Mucosa of descending colon (tissue), 3 donors: ENCODE measurements at regions of chr19 and their contacts with region 1.

Region 1: DNA sequence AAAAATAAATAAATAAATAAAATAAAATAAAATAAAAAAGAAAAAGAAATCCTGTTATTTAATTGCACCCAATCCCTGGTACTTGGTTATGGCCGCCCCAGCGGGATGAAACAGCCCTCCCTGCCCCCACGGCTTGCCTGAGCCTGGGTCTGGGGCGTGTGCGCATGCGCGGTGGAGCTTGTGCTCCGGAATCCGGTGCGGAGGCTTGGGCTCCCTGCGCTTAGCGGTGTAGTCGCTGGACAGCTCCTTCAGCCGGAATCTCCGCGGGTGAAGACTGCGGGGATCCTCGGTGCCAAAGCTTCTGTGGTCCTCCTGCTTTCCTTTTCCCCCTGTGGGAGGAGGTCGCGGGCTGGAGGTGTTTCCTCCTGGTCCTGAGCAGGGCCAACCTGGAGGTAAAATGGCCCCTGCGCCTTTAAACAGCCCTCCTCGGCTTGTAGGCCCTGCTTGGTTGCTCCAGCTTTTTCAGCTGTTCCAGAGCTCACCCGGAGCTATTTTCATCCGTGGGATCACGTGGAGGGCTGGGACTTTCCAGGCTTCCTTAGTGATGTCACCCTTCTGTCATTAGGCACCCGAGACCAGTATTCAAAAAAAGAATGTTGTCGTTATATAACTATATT is at the start of gene PLA2G4C:
- DNase-seq: peak; percentile 86 to 88 (median 87)
- ATAC-seq: peak; percentile 81
- H3K4me3 ChIP-seq: no peak within 1 kb of the TSS
- H3K4me1 ChIP-seq: peaks cover 12% of the 10 kb centered on the region
- CTCF ChIP-seq: no peak
- total RNA-seq, gene PLA2G4C: 5.0 to 13.1 (median 7.8) TPM

Region 2: DNA sequence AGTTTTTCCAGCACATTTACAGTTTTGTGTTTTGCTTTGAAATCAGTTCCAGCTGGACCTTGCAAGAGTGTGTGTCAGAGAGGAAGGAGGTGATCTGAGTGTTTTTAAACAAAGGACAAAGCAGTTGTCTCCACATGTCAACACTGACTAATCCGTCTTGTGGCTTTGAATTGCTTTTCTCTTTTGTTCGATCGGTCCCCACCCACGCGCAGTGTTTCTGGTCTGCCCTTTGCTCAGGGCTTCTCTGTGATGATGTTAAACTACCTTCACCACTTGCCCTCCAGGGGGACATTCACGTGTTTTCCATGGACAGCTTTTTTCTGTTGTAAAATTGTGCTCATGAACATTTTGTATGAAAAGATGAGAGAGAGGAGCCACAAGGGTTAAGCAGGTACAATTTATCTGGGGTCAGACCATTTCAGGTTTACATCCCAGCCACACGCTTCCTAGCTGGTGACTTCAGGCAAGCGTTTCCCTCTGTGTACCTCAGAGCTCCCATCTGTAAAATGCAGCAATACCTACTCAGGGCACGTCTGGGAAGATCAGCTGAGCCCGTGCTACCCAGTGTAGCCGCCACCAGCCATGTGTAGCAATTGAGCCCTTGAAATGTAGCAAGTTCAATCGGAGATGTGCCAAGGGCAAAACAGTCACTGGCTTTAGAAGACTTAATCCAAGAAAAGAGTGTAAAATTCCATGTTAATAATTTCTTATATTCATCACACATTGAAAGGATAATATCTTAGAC is 13.6 kb after region 1 on chr19:
- intact Hi-C with region 1: no loop called
- DNase-seq: no peak
- ATAC-seq: peak; percentile 55
- H3K4me3 ChIP-seq: no peak overlapping the region
- H3K4me1 ChIP-seq: no peaks in the 10 kb centered on the region
- CTCF ChIP-seq: no peak

Region 3: DNA sequence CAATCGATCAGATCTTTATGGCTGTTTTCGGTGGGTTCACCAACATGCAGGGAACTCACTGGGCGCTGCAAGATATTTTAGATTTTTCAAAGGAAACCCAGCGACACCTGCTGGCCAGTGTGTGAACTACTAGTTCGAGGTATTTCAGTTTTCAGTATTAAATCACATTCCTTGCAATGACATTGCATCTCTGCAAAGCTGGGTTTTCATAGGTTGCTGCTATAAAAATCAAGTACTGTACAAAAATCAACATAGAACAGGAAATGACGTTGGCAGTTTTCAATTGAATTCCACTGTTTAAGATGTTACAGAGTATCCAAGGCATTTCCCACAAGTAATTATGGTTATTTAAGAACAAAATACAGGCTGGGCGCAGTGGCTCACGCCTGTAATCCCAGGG is 42.1 kb after region 1 on chr19:
- intact Hi-C with region 1: loop called (anchors 2 to 5 kb)
- DNase-seq: peak in 2 of 3 donors; percentile 65 to 80
- ATAC-seq: peak; percentile 72
- H3K4me3 ChIP-seq: no peak overlapping the region
- H3K4me1 ChIP-seq: no peaks in the 10 kb centered on the region
- CTCF ChIP-seq: peak; percentile 53